Dorsolateral prefrontal cortex (tissue), 120 donors: ENCODE measurements at regions of chr1 and their contacts with region 1.

Region 1: DNA sequence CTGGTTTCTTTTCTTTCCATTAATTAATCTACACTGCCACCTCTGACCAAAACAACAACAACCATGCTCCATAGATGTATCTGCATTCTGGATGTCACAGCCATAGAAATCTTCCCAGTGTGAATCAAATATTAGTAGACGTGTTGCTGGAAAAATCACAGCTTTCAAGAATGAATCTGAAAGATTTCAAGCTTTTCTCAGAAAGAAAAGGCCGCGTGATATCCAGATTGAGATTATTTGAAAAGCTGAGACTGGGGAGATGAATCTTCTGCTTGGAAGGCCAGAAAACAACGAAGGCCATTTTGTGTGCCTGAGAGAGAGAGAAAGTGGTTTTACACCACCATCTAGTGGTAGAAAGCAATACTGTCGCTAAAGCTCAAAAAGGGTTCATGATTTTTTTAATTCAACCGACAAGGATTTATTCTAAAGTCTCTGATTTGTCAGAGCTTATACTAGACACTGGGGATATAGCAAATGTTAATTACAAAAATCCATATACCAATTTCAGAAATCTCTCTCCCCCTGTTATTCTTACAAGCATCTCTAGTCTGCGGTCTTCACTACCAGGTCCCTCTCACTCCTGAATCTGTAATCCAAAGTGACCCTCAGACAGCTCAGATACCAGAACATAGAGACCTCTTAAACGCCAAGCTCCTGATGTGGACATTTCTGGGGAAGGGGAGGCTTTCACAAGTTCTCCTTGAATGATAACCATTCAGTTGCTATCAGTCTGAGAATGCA is 87.5 kb upstream of the SGIP1 start:
- DNase-seq: peak in 1 of 10 donors; percentile 14
- H3K4me3 ChIP-seq: peak overlapping the region in 7 of 59 donors; percentile 6 to 28 (median 14)
- H3K27ac ChIP-seq: peak overlapping the region; percentile 8 to 90 (median 78)
- H3K27me3 ChIP-seq: no peaks in the 10 kb centered on the region
- CTCF ChIP-seq: peak; percentile 77 to 100 (median 94)

Region 2: DNA sequence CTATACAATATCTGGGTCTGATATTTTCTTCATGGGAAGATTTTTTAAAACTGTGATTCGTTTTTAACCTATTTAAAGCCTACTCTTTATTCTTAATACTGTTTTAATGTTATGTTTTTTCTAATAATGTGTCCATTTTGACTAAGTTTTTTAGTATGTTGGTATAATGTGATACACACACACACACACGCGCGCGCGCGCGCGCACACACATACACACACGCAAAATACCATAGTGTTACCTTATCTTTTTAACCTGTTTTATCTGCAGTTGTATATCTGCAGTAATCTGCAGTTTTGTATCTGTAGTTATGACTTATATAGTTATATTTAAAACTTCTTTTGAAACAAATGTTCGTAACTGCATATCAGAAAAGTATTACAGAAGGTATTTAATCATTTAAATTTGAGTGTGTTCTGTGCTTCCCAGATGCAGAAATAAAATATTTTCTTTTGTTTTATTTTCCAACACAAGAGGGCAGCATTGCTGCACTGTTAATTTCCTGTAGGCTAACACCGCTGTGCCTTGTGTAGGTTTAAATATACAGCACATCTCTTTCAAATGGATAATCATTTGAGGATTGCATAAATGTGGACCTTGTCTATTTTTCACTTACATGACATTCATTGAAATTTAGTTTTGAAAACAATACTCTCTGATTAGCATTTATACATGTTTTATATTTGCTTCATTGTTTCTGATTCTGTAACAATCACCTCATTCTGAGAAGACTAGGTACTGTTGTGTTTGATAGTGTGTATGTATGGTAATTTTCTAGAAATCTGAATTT is 487.7 kb before region 1 on chr1:
- intact Hi-C with region 1: loop called (anchors 2 to 5 kb)
- DNase-seq: peak in 1 of 10 donors; percentile 8
- H3K4me3 ChIP-seq: peak overlapping the region in 29 of 59 donors; percentile 1 to 56 (median 25)
- H3K27ac ChIP-seq: peak overlapping the region in 55 of 59 donors; percentile 1 to 99 (median 71)
- H3K27me3 ChIP-seq: no peaks in the 10 kb centered on the region
- CTCF ChIP-seq: peak; percentile 74 to 100 (median 88)

Region 3: DNA sequence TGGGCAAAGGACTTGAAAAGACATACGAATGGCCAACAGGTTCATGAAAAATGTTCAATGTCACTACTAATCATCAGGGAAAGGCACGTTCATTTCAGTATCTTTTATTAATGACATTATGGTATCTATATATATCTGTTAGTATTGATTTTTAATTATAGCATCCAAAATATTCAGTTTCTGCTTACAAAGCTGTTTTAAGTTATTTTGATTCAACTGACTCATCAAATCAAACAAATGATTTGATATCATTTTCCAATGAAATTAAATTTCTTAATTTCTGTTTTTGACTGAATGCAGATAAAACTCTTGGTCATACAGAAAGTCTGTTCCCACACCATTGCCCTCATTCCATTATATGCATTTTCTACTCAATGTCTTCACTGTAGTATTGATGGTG is 337.8 kb before region 1 on chr1:
- intact Hi-C with region 1: no loop called
- DNase-seq: no peak
- H3K4me3 ChIP-seq: no peak overlapping the region
- H3K27ac ChIP-seq: peak overlapping the region in 11 of 59 donors; percentile 0 to 68 (median 19)
- H3K27me3 ChIP-seq: no peaks in the 10 kb centered on the region
- CTCF ChIP-seq: no peak

Region 4: DNA sequence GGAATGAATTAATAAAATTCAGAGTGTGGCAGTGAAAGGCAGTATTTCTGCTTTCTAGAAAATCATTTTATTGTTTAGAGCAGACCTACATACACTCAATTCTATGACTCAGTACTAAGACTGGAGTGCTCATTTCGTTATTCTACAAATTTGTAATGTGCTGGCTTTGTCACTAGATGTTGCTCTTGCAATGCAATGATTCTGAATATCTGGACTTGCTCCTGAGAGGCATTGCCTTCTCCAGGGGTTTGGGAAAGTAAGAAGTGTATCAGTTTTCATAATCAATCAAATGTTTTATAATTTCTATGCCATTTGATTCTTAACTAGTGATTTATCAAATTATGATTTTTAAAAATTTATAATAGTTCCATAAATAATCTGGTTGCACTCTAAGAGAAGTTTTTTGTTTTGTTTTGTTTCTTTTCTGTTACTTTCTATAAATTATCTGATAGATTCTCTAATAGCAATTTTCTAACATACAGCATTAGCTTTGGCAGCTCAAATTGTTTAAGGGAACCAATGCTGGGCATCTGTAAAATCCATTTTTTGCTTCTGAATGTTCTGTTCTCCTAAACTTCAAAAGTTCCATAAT is 193.0 kb before region 1 on chr1:
- intact Hi-C with region 1: loop called (anchors 1 to 2 kb)
- DNase-seq: no peak
- H3K4me3 ChIP-seq: no peak overlapping the region
- H3K27ac ChIP-seq: peak overlapping the region in 44 of 59 donors; percentile 4 to 96 (median 46)
- H3K27me3 ChIP-seq: no peaks in the 10 kb centered on the region
- CTCF ChIP-seq: peak; percentile 43 to 96 (median 83)

Region 5: GRCh38 chr1:66350001-66350547 is 96.4 kb before region 1 on chr1:
- intact Hi-C with region 1: loop called (anchors 10 kb)
- DNase-seq: peak in 1 of 10 donors; percentile 53
- H3K4me3 ChIP-seq: peak overlapping the region in 37 of 59 donors; percentile 2 to 45 (median 13)
- H3K27ac ChIP-seq: peak overlapping the region; percentile 39 to 94 (median 83)
- H3K27me3 ChIP-seq: no peaks in the 10 kb centered on the region
- CTCF ChIP-seq: peak in 1 of 56 donors; percentile 13

Region 6: GRCh38 chr1:66580081-66580480 is 133.7 kb after region 1 on chr1:
- intact Hi-C with region 1: no loop called
- DNase-seq: no peak
- H3K4me3 ChIP-seq: no peak overlapping the region
- H3K27ac ChIP-seq: no peak overlapping the region
- H3K27me3 ChIP-seq: no peaks in the 10 kb centered on the region
- CTCF ChIP-seq: no peak